ENCODE measurements at regions of chr7 and their contacts with region 1.

Region 1: GRCh38 chr7:99525713-99526440 is 21.4 kb downstream of the ZKSCAN5 start:
- DNase-seq: peak; percentile 42
- ATAC-seq: peak; percentile 67; the same call in 1 of the 2 replicates
- H3K4me3 ChIP-seq: no peak overlapping the region
- H3K27ac ChIP-seq: no peak overlapping the region
- H3K4me1 ChIP-seq: no peaks in the 10 kb centered on the region
- H3K27me3 ChIP-seq: no peaks in the 10 kb centered on the region
- CTCF ChIP-seq: peak; percentile 73

Region 2: GRCh38 chr7:99601656-99602310 is 75.9 kb after region 1 on chr7:
- CTCF ChIA-PET with region 1: interaction called, 10 read pairs
- POLR2A ChIA-PET with region 1: no interaction called
- intact Hi-C with region 1: no loop called
- DNase-seq: no peak
- ATAC-seq: no peak
- H3K4me3 ChIP-seq: no peak overlapping the region
- H3K27ac ChIP-seq: no peak overlapping the region
- H3K4me1 ChIP-seq: no peaks in the 10 kb centered on the region
- H3K27me3 ChIP-seq: no peaks in the 10 kb centered on the region
- CTCF ChIP-seq: peak; percentile 35

Region 3: GRCh38 chr7:99837649-99838361 is 311.9 kb after region 1 on chr7:
- CTCF ChIA-PET with region 1: interaction called, 5 read pairs
- POLR2A ChIA-PET with region 1: no interaction called
- intact Hi-C with region 1: loop called (anchors 10 kb)
- DNase-seq: peak; percentile 32
- ATAC-seq: peak; percentile 68
- H3K4me3 ChIP-seq: no peak overlapping the region
- H3K27ac ChIP-seq: no peak overlapping the region
- H3K4me1 ChIP-seq: 0 out of 2 replicates have a peak, but pooled peaks cover 4% of the 10 kb centered on the region
- H3K27me3 ChIP-seq: peaks cover 18% of the 10 kb centered on the region; the same call in 1 of the 2 replicates
- CTCF ChIP-seq: peak; percentile 46

Region 4: DNA sequence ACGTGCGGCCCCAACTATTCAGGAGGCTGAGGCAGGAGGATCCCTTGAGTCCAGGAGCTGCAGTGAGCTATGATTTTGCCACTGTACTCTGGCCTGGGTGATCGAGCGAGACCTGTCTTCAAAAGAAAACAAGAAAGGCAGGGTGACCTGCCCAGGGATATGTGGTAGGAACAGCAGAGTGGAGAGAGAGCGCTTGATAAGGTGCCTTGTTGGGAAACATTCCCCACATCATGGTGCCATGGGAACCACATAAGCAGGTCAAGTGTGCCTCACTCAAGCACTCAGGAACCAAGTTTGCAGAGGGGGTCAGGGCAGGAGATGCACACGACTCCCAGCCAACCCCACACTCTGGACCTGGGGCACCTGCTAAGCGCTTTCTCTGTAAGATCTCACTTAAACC is 731.1 kb after region 1 on chr7:
- CTCF ChIA-PET with region 1: no interaction called
- POLR2A ChIA-PET with region 1: no interaction called
- intact Hi-C with region 1: no loop called
- DNase-seq: no peak
- ATAC-seq: no peak
- H3K4me3 ChIP-seq: no peak overlapping the region
- H3K27ac ChIP-seq: no peak overlapping the region
- H3K4me1 ChIP-seq: no peaks in the 10 kb centered on the region
- H3K27me3 ChIP-seq: no peaks in the 10 kb centered on the region
- CTCF ChIP-seq: no peak

Region 5: DNA sequence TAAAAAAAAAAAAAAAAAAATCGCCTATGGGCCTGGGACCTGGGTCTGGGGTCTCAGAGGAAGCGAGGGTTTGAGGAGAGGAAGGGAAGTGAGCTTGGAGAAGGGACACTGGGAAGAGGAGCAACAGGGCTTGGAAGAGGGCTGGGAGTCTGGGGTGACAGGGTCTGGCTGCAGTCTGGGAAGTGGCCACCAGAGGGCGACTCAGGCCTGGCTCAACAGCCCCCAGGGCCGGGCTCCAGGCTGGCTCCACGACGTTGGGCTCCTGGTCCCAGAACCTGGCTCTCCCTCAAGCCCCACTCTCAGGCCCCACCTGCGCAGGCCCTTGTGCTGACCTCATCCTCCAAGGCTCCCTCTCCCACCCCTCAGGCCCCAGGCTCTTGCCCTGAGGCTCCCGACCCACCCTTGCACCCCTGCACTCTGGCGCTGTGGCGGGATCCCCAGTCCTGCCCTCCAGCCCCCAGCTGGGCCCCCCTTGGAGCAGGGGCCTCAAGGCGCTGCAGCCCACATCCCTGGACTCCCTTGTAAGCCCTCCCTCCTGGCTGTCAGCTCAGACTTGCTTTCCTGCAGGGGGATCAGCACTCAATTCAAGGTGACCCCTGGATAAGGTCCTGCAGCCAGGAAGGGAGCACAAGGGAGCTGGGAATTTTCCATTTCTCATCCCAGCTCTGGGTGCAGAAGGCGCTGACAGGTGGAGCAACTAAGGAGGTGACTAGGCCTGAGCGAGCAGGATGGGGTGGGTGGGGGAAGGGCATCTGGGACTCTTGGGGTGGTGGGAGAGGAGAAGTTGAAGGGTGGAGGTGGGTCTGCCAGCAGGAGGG is 943.6 kb after region 1 on chr7:
- CTCF ChIA-PET with region 1: interaction called, 14 read pairs
- POLR2A ChIA-PET with region 1: no interaction called
- intact Hi-C with region 1: no loop called
- DNase-seq: peak; percentile 79
- ATAC-seq: peak; percentile 76
- H3K4me3 ChIP-seq: no peak overlapping the region
- H3K27ac ChIP-seq: no peak overlapping the region
- H3K4me1 ChIP-seq: no peaks in the 10 kb centered on the region
- H3K27me3 ChIP-seq: no peaks in the 10 kb centered on the region
- CTCF ChIP-seq: peak; percentile 80

Measured in PC-3 (cell line).